Kidney (tissue), 22 donors: ENCODE measurements at regions of chr5 and their contacts with region 1.

Region 1: GRCh38 chr5:178075840-178076548 is 37.3 kb upstream of the N4BP3 start:
- DNase-seq: peak in 4 of 5 donors; percentile 67 to 78 (median 72)
- H3K4me3 ChIP-seq: no peak overlapping the region
- H3K27ac ChIP-seq: no peak overlapping the region
- H3K4me1 ChIP-seq: peaks cover 0 to 2% (median 0%) of the 10 kb centered on the region in 3 donors
- H3K27me3 ChIP-seq: no peaks in the 10 kb centered on the region
- CTCF ChIP-seq: peak; percentile 73

Region 2: GRCh38 chr5:178146020-178146820 is 70.2 kb after region 1 on chr5:
- intact Hi-C with region 1: loop called (anchors 5 kb)
- DNase-seq: peak; percentile 70 to 87 (median 78)
- H3K4me3 ChIP-seq: no peak overlapping the region
- H3K27ac ChIP-seq: no peak overlapping the region
- H3K4me1 ChIP-seq: no peaks in the 10 kb centered on the region
- H3K27me3 ChIP-seq: no peaks in the 10 kb centered on the region
- CTCF ChIP-seq: peak; percentile 58

Region 3: DNA sequence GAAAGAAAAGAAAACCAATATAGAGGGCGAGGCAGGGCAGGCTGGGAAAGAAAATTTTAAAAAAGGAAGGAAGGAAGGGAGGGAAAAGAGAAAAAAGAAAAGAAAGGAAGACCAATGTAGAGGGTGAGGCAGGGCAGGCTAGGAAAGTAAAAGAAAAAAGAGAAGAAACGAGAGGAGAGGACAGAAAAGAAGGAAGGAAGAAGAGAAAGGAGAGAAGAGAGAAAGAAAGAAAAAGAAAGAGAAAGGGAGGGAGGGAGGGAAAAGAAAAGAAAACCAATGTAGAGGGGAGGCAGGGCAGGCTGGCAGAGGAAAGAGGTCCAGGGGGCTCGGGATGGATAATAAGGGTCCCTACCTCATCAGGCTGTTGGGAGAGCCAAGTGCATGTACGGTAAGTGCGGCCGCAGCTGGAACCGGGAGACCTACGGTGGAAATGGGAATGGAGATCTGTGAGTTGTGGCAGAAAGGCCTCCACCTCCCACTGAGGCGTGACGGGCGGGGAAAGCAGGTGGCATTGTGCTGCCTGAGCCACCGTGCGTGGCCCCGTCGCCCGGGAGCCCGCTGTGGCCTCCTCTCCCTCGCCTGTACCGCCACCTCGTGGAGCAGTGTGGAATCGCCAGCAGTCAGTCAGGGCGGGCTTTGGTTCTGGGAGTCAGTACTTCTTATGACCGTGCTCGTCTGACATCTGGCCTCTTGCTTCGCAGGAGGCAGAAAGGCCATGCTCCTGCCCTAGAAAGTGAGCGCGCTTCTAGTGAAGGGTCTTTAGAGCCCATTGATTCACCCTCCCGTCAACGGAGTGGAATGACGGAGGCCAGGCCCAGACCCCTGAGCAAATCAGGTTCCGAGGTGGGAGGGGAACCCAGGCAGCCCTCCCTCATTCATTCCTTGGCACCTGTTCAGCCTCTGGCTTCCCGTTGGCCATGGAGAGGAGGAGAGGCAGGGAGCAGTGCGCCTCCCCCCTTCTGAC is 88.1 kb after region 1 on chr5:
- intact Hi-C with region 1: loop called (anchors 5 kb)
- DNase-seq: peak; percentile 93 to 95 (median 94)
- H3K4me3 ChIP-seq: peak overlapping the region in 2 of 3 donors; percentile 21 to 44
- H3K27ac ChIP-seq: no peak overlapping the region
- H3K4me1 ChIP-seq: peaks cover 0 to 4% (median 0%) of the 10 kb centered on the region in 3 donors
- H3K27me3 ChIP-seq: no peaks in the 10 kb centered on the region
- CTCF ChIP-seq: peak; percentile 99